Esophagus squamous epithelium (tissue), 5 donors: ENCODE measurements at regions of chr16 and their contacts with region 1.

Region 1: DNA sequence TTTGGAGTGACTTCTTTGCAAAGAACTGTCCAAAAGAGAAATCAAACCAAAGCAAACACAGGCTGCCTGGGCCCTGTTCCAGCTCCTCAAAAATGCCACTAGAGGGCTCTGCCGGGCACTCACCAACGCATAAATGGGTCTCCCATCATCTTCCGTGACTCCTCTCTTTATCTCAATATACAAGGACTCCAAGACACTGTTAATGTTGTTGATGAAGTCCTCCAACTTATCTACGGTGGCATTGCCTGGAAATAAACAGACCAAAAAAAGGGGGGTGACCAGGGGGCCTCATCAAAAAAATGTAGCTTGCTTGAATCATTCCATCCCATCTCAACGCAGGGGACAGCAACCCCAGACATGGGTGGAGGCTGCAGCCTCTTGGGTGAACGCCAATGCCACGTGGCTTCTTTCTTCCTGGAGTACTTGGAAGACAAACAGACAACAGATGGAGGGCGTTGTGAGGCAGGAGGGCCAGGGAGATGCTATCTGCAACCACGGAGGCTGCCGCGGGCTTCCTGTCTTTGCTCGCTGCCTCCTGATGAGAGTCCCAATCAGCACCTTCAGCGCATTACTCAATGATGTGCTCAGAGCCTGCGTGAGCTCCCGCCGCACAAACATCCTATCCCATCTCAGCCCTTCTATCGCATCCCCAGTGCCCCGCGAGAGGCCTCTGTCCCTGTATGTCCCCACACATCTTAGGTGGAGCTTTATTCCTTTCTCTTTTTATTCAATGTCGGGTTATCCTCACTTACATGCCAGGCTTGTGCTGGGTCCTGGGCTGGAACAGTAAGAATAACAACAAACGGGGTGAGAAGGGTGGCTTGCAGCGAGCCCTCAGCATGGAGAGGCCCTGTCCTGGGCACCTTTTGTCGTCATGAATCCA is 32.0 kb downstream of the KDM8 start:
- DNase-seq: peak; percentile 19
- H3K4me3 ChIP-seq: peak overlapping the region in 1 of 4 donors; percentile 40
- H3K27ac ChIP-seq: peak overlapping the region; percentile 66 to 85 (median 76)
- H3K4me1 ChIP-seq: peaks cover 19 to 90% (median 48%) of the 10 kb centered on the region in 3 donors
- H3K27me3 ChIP-seq: no peaks in the 10 kb centered on the region
- CTCF ChIP-seq: peak; percentile 62 to 88 (median 74)
- POLR2A ChIP-seq: peak in 2 of 4 donors; percentile 11 to 44

Region 2: GRCh38 chr16:27367461-27368357 is 132.4 kb after region 1 on chr16:
- intact Hi-C with region 1: loop called (anchors 5 kb)
- DNase-seq: peak; percentile 34
- H3K4me3 ChIP-seq: peak overlapping the region; percentile 1 to 49 (median 14)
- H3K27ac ChIP-seq: peak overlapping the region; percentile 71 to 80 (median 74)
- H3K4me1 ChIP-seq: peaks cover 16 to 50% (median 36%) of the 10 kb centered on the region in 3 donors
- H3K27me3 ChIP-seq: no peaks in the 10 kb centered on the region
- CTCF ChIP-seq: peak; percentile 71 to 87 (median 81)
- POLR2A ChIP-seq: no peak